IMR-90 (cell line): ENCODE measurements at regions of chr9 and their contacts with region 1.

Region 1: DNA sequence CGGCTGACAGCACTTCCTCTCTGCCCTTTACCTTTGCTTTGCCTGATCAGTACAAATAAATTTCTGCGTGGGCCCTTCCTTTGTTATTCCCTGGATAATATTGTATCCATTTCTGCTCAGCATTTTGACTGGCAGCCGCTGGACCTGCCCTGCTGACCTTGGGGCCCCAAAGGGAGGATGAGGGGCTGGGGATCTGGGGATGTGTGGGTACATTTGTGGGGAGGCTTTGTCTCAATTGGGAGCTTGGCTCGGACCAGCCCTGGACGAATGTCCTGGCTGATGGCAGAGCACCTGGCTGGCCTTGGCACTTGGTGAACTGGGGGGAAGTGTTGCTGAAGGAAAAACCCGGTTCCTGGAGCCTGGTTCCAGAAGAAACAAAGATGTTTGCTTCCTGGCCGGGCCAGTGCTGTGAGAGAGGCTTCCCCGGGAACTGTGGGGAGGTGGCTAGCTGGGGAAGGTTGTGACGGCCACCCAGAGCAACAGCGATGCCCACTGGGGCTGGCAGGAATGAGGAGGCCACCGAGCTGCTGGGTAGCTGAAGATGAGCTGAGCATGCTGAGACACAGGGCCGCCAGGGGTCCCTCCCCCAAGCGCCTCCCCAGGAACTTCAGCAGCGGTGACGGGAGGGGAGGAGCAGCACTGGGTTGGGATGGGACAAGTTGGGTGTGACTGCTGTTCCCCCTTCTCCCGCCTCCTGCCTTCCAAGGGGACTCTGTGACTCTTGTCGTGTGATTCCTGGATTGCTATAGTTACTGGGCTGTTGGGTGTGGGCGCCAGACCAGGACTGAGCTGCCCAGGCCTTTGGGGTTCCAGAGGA is 8.4 kb downstream of the LMX1B start:
- DNase-seq: no peak
- ATAC-seq: no peak
- H3K4me3 ChIP-seq: no peak overlapping the region
- H3K27ac ChIP-seq: no peak overlapping the region
- H3K4me1 ChIP-seq: no peaks in the 10 kb centered on the region
- H3K27me3 ChIP-seq: peaks cover 98% of the 10 kb centered on the region
- CTCF ChIP-seq: no peak
- POLR2A ChIP-seq: no peak
- RAD21 ChIP-seq: no peak

Region 2: GRCh38 chr9:126564711-126565110 is 57.4 kb before region 1 on chr9:
- CTCF ChIA-PET with region 1: no interaction called
- POLR2A ChIA-PET with region 1: no interaction called
- dilution Hi-C with region 1: no loop called
- in situ Hi-C with region 1: no loop called
- intact Hi-C with region 1: no loop called
- DNase-seq: no peak
- ATAC-seq: no peak
- H3K4me3 ChIP-seq: no peak overlapping the region
- H3K27ac ChIP-seq: no peak overlapping the region
- H3K4me1 ChIP-seq: no peaks in the 10 kb centered on the region
- H3K27me3 ChIP-seq: peaks cover 46% of the 10 kb centered on the region
- CTCF ChIP-seq: no peak
- POLR2A ChIP-seq: no peak
- RAD21 ChIP-seq: no peak

Region 3: DNA sequence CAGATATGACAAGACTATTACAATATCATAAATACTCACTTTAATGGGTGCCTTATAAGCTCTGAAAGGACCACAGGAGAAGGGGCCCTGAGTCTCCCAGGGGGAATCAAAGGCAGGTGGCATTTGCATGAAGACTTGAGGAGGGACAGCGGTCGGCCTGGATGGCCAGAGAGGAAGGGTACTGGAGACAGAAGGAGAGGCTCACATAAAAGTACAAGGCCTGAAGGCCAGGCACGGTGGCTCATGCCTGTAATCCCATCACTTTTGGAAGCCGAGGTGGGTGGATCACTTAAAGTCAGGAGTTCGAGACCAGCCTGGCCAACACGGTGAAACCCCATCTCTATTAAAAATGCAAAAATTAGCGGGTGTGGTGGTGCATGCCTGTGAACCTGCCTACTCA is 37.5 kb before region 1 on chr9:
- CTCF ChIA-PET with region 1: no interaction called
- POLR2A ChIA-PET with region 1: interaction called, 17 read pairs
- dilution Hi-C with region 1: no loop called
- in situ Hi-C with region 1: no loop called
- intact Hi-C with region 1: no loop called
- DNase-seq: no peak
- ATAC-seq: no peak
- H3K4me3 ChIP-seq: no peak overlapping the region
- H3K27ac ChIP-seq: no peak overlapping the region
- H3K4me1 ChIP-seq: no peaks in the 10 kb centered on the region; the same call in 1 of the 2 replicates
- H3K27me3 ChIP-seq: peaks cover 74% of the 10 kb centered on the region
- CTCF ChIP-seq: no peak
- POLR2A ChIP-seq: no peak
- RAD21 ChIP-seq: no peak